PC-9 (cell line): ENCODE measurements at regions of chr1 and their contacts with region 1.

Region 1: DNA sequence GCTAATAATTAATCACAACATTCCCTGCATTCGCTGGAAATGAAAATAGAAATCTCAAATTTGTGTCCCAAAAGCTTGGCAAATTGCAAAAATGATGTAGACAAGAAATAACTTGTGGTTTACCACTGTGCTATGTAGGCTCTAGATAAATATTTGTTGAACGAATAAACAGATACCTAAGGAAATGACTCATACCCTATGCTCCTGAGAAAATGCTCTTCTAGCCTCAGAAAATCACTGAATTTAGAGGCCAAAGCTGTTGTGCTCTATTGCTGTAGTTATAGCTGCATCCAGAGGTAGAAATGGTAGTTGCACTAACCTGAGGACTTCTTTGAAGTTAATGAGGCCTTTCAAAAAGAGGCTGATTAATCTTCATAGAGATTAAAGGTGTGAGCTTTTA is 142.0 kb upstream of the ZNHIT6 start:
- DNase-seq: peak; percentile 17 to 97
- H3K4me3 ChIP-seq: no peak overlapping the region
- H3K27ac ChIP-seq: peak overlapping the region; percentile 61
- H3K4me1 ChIP-seq: peaks cover 29% of the 10 kb centered on the region
- H3K27me3 ChIP-seq: no peaks in the 10 kb centered on the region
- CTCF ChIP-seq: peak; percentile 57

Region 2: GRCh38 chr1:85494904-85495266 is 355.4 kb before region 1 on chr1:
- CTCF ChIA-PET with region 1: no interaction called
- POLR2A ChIA-PET with region 1: interaction called, 4 read pairs
- intact Hi-C with region 1: loop called (anchors 1 kb)
- DNase-seq: peak in 1 of 2 experiments; percentile 46
- H3K4me3 ChIP-seq: no peak overlapping the region; the same call in 1 of the 2 replicates
- H3K27ac ChIP-seq: peak overlapping the region; percentile 51
- H3K4me1 ChIP-seq: peaks cover 35% of the 10 kb centered on the region
- H3K27me3 ChIP-seq: no peaks in the 10 kb centered on the region
- CTCF ChIP-seq: no peak

Region 3: GRCh38 chr1:85911742-85912141 is 61.5 kb after region 1 on chr1:
- CTCF ChIA-PET with region 1: no interaction called
- POLR2A ChIA-PET with region 1: no interaction called
- intact Hi-C with region 1: no loop called
- DNase-seq: no peak
- H3K4me3 ChIP-seq: no peak overlapping the region
- H3K27ac ChIP-seq: no peak overlapping the region
- H3K4me1 ChIP-seq: no peaks in the 10 kb centered on the region
- H3K27me3 ChIP-seq: no peaks in the 10 kb centered on the region
- CTCF ChIP-seq: peak; percentile 66